SK-N-SH (cell line): ENCODE measurements at regions of chr17 and their contacts with region 1.

Region 1: GRCh38 chr17:10761281-10761680 is 31.5 kb upstream of the TMEM220 start:
- DNase-seq: no peak
- H3K4me3 ChIP-seq: no peak overlapping the region
- H3K27ac ChIP-seq: no peak overlapping the region
- H3K4me1 ChIP-seq: peaks cover 0 to 15% of the 10 kb centered on the region in 2 experiments; a peak in 1 of 4 replicates
- H3K27me3 ChIP-seq: no peaks in the 10 kb centered on the region
- CTCF ChIP-seq: no peak
- EP300 ChIP-seq: no peak
- RAD21 ChIP-seq: no peak

Region 2: GRCh38 chr17:10681866-10682446 is 79.3 kb before region 1 on chr17:
- CTCF ChIA-PET with region 1: no interaction called
- POLR2A ChIA-PET with region 1: no interaction called
- DNase-seq: no peak
- H3K4me3 ChIP-seq: no peak overlapping the region
- H3K27ac ChIP-seq: peak overlapping the region; percentile 23 to 58; a peak in 1 of 4 replicates
- H3K4me1 ChIP-seq: no peaks in the 10 kb centered on the region; a peak in 1 of 4 replicates
- H3K27me3 ChIP-seq: no peaks in the 10 kb centered on the region
- CTCF ChIP-seq: no peak
- EP300 ChIP-seq: no peak
- RAD21 ChIP-seq: no peak

Region 3: GRCh38 chr17:10729334-10730193 is 31.7 kb before region 1 on chr17 and contains the start of gene TMEM220:
- CTCF ChIA-PET with region 1: no interaction called
- POLR2A ChIA-PET with region 1: no interaction called
- DNase-seq: peak; percentile 87
- H3K4me3 ChIP-seq: peak within 1 kb of the TSS; percentile 60 to 61
- H3K27ac ChIP-seq: peak within 1 kb of the TSS; percentile 20 to 76; a peak in 1 of 4 replicates
- H3K4me1 ChIP-seq: peaks cover 0 to 6% of the 10 kb centered on the region in 2 experiments; a peak in 1 of 4 replicates
- H3K27me3 ChIP-seq: no peaks in the 10 kb centered on the region
- CTCF ChIP-seq: no peak
- EP300 ChIP-seq: no peak
- RAD21 ChIP-seq: no peak
- polyA plus RNA-seq, gene TMEM220: 2.7 and 3.1 TPM in 2 replicates

Region 4: DNA sequence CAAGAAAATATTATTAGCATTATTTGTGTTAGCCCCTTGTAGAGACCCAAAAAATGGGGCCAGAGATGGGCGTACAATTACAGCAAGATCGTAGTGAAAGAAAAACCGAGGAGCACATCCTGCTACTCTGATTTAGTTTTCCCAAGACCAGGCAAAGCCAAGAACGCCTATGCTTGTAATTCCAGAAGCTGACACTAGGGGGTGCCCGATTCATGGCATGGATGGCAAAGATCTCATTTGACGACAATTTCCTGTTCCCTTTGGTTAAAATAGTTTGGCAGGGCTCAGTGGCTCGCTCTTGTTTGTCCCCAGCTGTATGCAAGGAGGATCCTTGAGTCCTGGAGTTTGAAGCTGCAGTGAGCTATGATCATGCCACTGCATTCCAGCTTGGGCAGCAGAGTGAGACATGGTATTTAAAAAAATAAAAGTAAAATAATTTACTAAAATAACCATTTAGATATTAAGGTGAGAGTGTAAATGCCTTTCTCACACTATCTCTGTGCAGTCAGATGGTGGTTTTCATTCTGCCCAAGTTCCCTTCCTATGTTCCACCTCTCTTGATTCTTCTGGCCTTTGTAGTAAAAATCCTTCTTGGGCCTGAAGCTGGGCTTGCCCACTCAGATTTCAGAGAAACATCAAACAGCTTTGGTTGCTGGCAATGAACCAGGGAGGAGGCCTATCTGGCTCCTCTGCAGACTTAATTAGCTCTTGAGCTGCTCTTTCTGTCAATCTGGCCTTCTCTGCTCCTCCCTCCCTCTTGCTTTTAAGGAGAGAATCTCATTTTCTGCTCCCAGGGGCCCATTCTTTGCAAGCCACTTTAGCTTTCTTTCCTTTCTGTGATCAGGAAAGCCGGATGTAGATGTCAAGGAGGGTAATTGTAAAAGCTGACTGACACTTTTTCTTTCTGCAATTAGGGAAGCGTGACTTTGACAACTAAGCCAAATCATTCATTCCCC is 11.4 kb after region 1 on chr17:
- CTCF ChIA-PET with region 1: interaction called, 11 read pairs
- POLR2A ChIA-PET with region 1: no interaction called
- DNase-seq: no peak
- H3K4me3 ChIP-seq: peak overlapping the region in 1 of 2 experiments; percentile 50; a peak in 1 of 4 replicates
- H3K27ac ChIP-seq: peak overlapping the region in 1 of 2 experiments; percentile 34; a peak in 1 of 4 replicates
- H3K4me1 ChIP-seq: peaks cover 0 to 10% of the 10 kb centered on the region in 2 experiments; a peak in 1 of 4 replicates
- H3K27me3 ChIP-seq: no peaks in the 10 kb centered on the region
- CTCF ChIP-seq: peak; percentile 58
- EP300 ChIP-seq: no peak
- RAD21 ChIP-seq: no peak